ENCODE measurements at regions of chr3 and their contacts with region 1.

Region 1: GRCh38 chr3:134299185-134299887 is 48.7 kb upstream of the RYK start:
- DNase-seq: no peak

Region 2: DNA sequence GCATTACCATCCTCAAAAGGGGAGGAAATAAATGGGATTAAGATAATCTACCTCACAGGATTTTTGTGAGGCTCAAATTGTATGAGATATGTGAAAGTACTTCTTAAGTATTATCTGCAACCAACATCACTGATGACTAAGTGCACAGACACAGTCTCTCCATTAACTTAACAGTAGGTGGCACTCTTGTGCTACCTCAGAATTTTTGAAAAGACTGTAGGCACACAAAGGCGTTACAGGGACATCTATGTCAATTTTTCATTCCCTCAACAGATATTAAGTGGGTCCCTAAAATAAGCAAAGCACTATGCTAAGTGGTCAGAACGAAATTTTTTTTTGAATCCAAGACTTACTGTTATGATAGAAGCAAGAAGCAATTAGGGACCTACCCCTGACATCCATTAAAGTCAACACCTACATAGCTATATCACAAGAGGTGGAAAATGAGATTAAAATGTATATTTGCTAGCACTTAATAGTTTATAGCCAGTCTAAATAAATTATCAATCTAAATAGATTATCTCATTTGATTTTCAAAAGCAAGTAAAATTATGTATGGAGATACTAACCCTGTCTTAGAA is 101.6 kb before region 1 on chr3:
- intact Hi-C with region 1: loop called (anchors 5 kb)
- DNase-seq: no peak

Region 3: GRCh38 chr3:134576426-134576825 is 277.1 kb after region 1 on chr3:
- intact Hi-C with region 1: no loop called
- DNase-seq: no peak

Measured in cardiac septum (tissue), 1 donor.